Activated naive CD4-positive, alpha-beta T cell treated with anti-CD3 and anti-CD28 coated beads for 36 hours (primary cell): ENCODE measurements at regions of chr20 and their contacts with region 1.

Region 1: GRCh38 chr20:50790651-50791277 is 4.1 kb upstream of the BCAS4 start:
- DNase-seq: peak; percentile 89
- H3K4me3 Mint-ChIP-seq: peak overlapping the region; percentile 21
- H3K27ac Mint-ChIP-seq: peak overlapping the region; percentile 40
- H3K4me1 Mint-ChIP-seq: peaks cover 11% of the 10 kb centered on the region
- H3K27me3 Mint-ChIP-seq: no peaks in the 10 kb centered on the region

Region 2: GRCh38 chr20:50776122-50776817 is 14.5 kb before region 1 on chr20:
- CTCF ChIA-PET with region 1: interaction called, 10 read pairs
- intact Hi-C with region 1: no loop called
- DNase-seq: no peak
- H3K4me3 Mint-ChIP-seq: no peak overlapping the region
- H3K27ac Mint-ChIP-seq: no peak overlapping the region
- H3K4me1 Mint-ChIP-seq: no peaks in the 10 kb centered on the region
- H3K27me3 Mint-ChIP-seq: peaks cover 3% of the 10 kb centered on the region

Region 3: DNA sequence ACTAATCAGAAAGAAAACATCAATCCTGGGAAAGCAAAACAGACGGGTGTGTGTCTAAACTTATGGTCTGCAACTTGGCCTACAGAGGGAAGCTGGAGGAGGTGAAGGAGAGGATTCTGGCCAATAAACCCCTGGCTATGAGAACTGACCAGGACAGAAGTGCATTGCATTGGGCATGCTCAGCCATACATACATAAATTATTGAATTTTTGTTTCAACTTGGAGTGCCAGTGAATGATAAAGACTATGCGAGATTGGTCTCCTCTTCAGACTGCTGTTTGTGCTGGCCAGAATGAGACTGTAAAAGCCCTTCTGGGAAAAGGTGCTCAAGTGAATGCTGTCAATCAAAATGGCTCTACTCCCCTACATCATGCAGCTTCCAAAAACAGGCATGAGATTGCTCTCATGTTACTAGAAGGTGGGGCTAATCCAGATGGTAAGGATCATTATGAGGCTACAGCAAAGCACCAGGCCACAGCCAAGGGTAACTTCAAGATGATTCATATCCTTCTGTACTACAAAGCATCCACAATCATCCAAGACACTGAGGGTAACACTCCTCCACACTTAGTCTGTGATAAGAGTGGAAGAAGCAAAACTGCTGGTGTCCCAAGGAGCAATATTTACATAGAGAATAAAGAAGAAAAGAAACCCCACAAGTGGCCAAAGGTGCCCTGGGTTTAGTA is 123.1 kb after region 1 on chr20:
- CTCF ChIA-PET with region 1: interaction called, 10 read pairs
- intact Hi-C with region 1: no loop called
- DNase-seq: peak; percentile 53
- H3K4me3 Mint-ChIP-seq: no peak overlapping the region
- H3K27ac Mint-ChIP-seq: peak overlapping the region; percentile 80
- H3K4me1 Mint-ChIP-seq: peaks cover 83% of the 10 kb centered on the region
- H3K27me3 Mint-ChIP-seq: no peaks in the 10 kb centered on the region

Region 4: GRCh38 chr20:50958615-50959542 is 168.1 kb after region 1 on chr20 and contains the start of gene MOCS3:
- CTCF ChIA-PET with region 1: interaction called, 14 read pairs
- intact Hi-C with region 1: loop called (anchors 1 kb)
- DNase-seq: peak; percentile 86
- H3K4me3 Mint-ChIP-seq: peak within 1 kb of the TSS; percentile 89
- H3K27ac Mint-ChIP-seq: peak within 1 kb of the TSS; percentile 99
- H3K4me1 Mint-ChIP-seq: peaks cover 62% of the 10 kb centered on the region
- H3K27me3 Mint-ChIP-seq: no peaks in the 10 kb centered on the region
- total RNA-seq, gene MOCS3: 1.6 to 2.2 TPM

Region 5: DNA sequence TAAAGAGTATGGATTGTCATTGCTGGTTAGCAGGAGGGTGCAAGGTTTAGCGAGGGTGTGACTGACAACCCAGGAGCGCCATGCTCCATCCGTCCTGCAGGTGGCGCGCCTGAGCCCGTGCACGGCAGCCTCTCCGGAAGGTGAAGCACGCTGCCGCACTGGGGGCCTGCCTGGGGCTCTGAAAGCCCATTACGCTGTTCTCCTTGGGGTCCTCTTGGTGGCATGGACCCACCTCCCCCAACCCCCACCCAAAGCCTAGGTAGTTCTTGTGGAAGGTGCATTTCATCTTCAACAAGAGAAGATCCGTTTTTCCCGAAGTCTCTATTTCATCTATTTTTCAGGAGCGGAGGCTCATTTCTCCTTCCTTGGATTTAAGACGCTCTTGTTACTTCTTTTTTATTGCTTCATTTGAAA is 429.5 kb after region 1 on chr20:
- CTCF ChIA-PET with region 1: no interaction called
- intact Hi-C with region 1: loop called (anchors 5 kb)
- DNase-seq: peak; percentile 76
- H3K4me3 Mint-ChIP-seq: no peak overlapping the region
- H3K27ac Mint-ChIP-seq: no peak overlapping the region
- H3K4me1 Mint-ChIP-seq: peaks cover 15% of the 10 kb centered on the region
- H3K27me3 Mint-ChIP-seq: peaks cover 56% of the 10 kb centered on the region